Left cardiac atrium (tissue), 4 donors: ENCODE measurements at regions of chr10 and their contacts with region 1.

Region 1: DNA sequence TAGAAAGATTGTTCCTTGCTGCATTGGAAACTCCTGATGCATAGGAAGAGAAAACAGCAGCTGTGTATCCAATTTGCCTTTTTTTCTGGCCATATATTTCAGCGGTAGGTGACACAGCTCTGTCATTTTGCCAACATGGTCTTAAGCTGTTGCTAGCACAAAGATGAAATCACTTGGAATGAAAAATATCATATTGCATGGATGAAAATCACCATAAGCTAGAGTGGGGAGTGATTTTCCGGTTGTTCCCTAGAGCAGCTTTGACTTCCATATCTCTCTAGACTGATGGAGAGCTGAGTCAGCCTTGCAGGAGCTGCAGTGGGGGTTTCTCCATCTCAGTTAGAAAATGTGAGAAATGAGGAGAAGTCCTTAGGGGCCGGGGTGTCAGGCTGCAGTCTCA is 38.3 kb upstream of the BTBD16 start:
- DNase-seq: no peak
- ATAC-seq: no peak

Region 2: GRCh38 chr10:120987359-120987758 is 1245.4 kb before region 1 on chr10:
- intact Hi-C with region 1: no loop called
- DNase-seq: no peak
- ATAC-seq: no peak

Region 3: DNA sequence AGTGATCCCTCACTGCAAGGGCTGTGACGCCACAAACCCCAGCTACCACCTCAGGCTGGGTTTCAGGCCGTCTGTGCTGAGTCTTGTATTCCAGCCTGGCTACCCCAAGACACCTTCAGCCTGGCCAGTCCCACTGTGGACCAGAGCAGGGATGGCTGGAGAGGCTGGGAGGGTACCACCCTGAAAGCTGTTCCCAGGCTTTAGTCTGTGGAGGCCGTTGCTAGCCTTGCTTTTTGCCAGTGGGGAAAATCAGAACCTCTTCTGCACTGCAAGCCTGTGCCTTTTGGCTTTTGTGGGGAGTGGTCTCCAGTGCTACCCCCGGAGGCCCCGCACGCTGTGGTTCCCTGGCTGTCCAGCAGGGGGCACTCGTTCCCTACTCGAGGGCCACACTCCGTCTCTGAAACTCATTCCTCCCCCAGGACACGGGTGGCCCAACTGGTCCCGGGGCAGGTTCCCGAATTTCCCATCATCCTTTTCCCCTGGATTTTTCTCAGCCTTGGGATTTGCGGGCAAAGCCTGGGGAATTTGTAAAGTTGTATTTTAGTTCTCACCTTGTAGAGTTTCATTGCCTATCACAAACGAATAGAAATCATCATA is 90.0 kb before region 1 on chr10:
- intact Hi-C with region 1: loop called in 1 of 2 experiments (anchors 10 kb)
- DNase-seq: no peak
- ATAC-seq: no peak